MCF 10A (cell line): ENCODE measurements at regions of chr22 and their contacts with region 1.

Region 1: DNA sequence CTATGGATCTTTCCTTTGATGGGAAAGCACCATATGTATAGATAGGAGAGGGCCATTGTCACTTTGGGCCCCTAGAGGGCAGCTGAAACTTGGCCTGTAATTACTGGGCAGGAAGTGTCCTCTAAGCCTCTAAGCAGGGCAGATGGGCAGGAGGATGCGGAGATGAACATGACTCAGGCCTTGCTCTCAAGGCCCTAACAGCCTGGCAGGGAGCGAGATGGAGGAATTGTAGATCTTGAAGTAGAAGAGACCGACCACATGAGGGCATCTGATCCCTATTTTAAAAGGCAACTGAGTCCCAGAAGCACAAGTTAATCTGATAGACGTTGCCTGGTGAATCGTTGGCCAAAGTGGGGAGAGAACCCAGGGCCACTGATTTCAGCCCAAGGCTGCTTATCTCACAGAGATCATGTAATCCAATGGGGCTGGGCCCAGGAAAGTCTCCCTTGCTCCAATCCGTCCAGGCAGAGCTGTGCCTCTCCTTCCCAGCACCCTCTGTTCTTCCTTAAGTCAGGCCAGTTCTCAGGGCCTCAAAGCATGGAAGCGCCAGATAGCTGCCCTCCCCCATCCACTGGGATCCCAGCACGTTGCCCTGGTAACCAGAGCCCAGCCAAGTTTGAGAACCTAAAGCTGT is 2.5 kb upstream of the SEPTIN3 start:
- DNase-seq: peak; percentile 76
- H3K4me3 Mint-ChIP-seq: no peak overlapping the region
- H3K27ac Mint-ChIP-seq: no peak overlapping the region
- H3K4me1 Mint-ChIP-seq: peaks cover 6% of the 10 kb centered on the region
- H3K27me3 Mint-ChIP-seq: no peaks in the 10 kb centered on the region
- CTCF ChIP-seq: peak; percentile 29

Region 2: DNA sequence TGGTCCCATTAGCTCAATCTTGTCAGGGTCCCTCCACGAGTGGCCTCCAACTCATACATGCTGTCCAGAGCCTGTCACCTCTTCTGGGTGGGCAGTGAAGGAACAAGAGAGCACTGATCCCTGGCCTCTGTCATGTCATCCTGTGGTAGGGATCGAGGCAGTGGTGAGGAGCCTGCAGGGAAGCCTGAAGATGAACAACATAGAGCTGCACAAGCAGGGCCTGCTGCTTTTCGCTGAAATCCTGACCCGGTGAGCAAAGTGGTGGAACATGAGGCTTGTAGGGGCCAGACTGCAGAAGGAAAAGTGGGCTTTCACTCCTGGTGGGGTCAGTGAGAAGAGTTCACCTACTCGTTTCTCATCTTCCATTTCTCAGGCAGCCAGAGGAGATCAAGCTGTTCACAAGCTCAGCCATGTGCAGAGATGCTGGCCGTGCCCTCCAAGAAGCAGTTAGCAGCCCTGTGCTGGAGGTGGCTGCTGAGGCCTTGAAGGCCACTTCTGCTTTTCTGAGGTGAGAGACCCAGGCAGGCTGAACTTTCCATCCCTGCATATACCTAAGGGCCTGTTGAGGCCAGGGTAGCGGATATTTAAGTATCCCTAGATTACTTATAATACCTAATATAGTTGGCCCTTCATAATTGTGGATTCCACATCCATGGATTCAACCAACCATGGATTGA is 234.5 kb before region 1 on chr22:
- CTCF ChIA-PET with region 1: no interaction called
- POLR2A ChIA-PET with region 1: no interaction called
- intact Hi-C with region 1: no loop called
- DNase-seq: no peak
- H3K4me3 Mint-ChIP-seq: no peak overlapping the region
- H3K27ac Mint-ChIP-seq: no peak overlapping the region
- H3K4me1 Mint-ChIP-seq: no peaks in the 10 kb centered on the region
- H3K27me3 Mint-ChIP-seq: peaks cover 4% of the 10 kb centered on the region
- CTCF ChIP-seq: no peak

Region 3: GRCh38 chr22:41935015-41935351 is 31.7 kb before region 1 on chr22:
- CTCF ChIA-PET with region 1: no interaction called
- POLR2A ChIA-PET with region 1: no interaction called
- intact Hi-C with region 1: no loop called
- DNase-seq: no peak
- H3K4me3 Mint-ChIP-seq: no peak overlapping the region
- H3K27ac Mint-ChIP-seq: no peak overlapping the region
- H3K4me1 Mint-ChIP-seq: no peaks in the 10 kb centered on the region
- H3K27me3 Mint-ChIP-seq: no peaks in the 10 kb centered on the region
- CTCF ChIP-seq: no peak

Region 4: GRCh38 chr22:42033263-42034181 is 66.8 kb after region 1 on chr22:
- CTCF ChIA-PET with region 1: no interaction called
- POLR2A ChIA-PET with region 1: no interaction called
- intact Hi-C with region 1: no loop called
- DNase-seq: no peak
- H3K4me3 Mint-ChIP-seq: no peak overlapping the region
- H3K27ac Mint-ChIP-seq: no peak overlapping the region
- H3K4me1 Mint-ChIP-seq: no peaks in the 10 kb centered on the region
- H3K27me3 Mint-ChIP-seq: peaks cover 13% of the 10 kb centered on the region
- CTCF ChIP-seq: no peak

Region 5: DNA sequence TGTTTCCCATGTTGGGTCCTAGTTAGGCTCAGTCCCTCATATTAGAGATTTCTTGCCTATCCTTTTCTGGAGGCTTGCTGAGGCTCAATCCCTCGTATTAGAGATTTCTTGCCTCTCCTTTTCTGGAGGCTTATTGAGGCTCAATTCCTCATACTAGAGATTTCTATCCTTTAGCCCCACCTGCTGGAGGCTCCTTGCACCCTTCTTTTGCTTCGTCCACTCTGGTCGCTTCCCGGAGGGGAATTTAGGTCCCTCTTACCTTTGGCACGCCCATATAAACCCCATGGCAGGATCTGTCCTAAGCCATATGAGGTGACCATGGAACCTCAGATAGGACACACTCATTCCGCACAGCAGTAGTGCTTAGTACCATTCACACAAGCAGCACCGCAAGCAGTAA is 148.0 kb after region 1 on chr22:
- CTCF ChIA-PET with region 1: no interaction called
- POLR2A ChIA-PET with region 1: interaction called, 4 read pairs
- intact Hi-C with region 1: loop called (anchors 1 kb)
- DNase-seq: peak; percentile 46
- H3K4me3 Mint-ChIP-seq: no peak overlapping the region
- H3K27ac Mint-ChIP-seq: no peak overlapping the region
- H3K4me1 Mint-ChIP-seq: no peaks in the 10 kb centered on the region
- H3K27me3 Mint-ChIP-seq: no peaks in the 10 kb centered on the region
- CTCF ChIP-seq: peak; percentile 40

Region 6: GRCh38 chr22:42473484-42474193 is 506.9 kb after region 1 on chr22:
- CTCF ChIA-PET with region 1: interaction called, 6 read pairs
- POLR2A ChIA-PET with region 1: no interaction called
- intact Hi-C with region 1: loop called (anchors 10 kb)
- DNase-seq: peak; percentile 74
- H3K4me3 Mint-ChIP-seq: no peak overlapping the region
- H3K27ac Mint-ChIP-seq: no peak overlapping the region
- H3K4me1 Mint-ChIP-seq: no peaks in the 10 kb centered on the region
- H3K27me3 Mint-ChIP-seq: peaks cover 39% of the 10 kb centered on the region
- CTCF ChIP-seq: peak; percentile 46